Heart left ventricle (tissue), 16 donors: ENCODE measurements at regions of chr11 and their contacts with region 1.

Region 1: DNA sequence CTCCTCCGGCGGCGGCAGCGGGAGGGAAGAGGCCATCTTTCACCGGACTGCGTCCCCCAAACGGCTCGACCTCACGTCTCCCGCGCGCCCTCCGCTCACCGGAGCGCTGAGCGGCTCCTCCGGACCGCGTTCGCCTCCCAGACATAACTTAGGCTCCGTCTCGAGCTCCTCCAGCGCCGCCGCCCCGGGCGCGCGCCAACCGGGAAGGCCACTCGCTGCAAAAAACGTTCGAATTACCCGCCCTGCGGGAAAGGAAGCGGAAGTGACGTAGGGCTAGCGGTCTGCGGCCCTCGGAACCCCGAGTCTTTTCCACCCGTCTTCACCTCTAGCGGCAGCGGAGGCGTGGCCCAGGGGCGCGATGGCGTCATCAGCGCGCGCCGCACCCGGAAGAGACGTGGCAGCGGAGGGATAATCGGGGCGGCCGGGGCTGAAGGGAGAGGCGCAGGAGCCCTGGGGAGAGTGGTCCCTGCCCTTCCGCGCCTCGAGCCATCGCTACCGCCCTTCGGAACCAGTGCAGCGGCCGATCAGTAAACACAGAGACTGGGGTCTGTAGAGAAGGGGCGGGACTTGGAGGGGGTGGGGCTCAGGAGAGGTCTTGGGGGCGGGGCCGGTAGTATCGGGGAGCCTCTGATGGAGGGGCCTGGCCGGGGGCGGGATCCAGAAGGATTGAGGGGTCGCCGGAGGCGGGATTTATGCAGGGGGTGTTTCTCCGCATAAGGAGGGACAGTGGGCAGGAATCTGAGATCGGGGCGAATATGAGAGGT is at the starts of genes CDCA5 and ZFPL1:
- DNase-seq: peak; percentile 95 to 96 (median 95)
- ATAC-seq: peak; percentile 90 to 98 (median 97)
- H3K4me3 ChIP-seq: peak within 1 kb of the TSS; percentile 44 to 93 (median 79)
- H3K27ac ChIP-seq: peak within 1 kb of the TSS; percentile 45 to 95 (median 90)
- H3K4me1 ChIP-seq: peaks cover 4 to 27% (median 16%) of the 10 kb centered on the region in 12 donors
- H3K27me3 ChIP-seq: no peaks in the 10 kb centered on the region
- CTCF ChIP-seq: no peak
- POLR2A ChIP-seq: peak in 1 of 2 donors; percentile 58
- total RNA-seq, gene CDCA5: 0.42 to 11.6 (median 0.81) TPM
- total RNA-seq, gene ZFPL1: 19.6 to 42.8 (median 25.0) TPM

Region 2: DNA sequence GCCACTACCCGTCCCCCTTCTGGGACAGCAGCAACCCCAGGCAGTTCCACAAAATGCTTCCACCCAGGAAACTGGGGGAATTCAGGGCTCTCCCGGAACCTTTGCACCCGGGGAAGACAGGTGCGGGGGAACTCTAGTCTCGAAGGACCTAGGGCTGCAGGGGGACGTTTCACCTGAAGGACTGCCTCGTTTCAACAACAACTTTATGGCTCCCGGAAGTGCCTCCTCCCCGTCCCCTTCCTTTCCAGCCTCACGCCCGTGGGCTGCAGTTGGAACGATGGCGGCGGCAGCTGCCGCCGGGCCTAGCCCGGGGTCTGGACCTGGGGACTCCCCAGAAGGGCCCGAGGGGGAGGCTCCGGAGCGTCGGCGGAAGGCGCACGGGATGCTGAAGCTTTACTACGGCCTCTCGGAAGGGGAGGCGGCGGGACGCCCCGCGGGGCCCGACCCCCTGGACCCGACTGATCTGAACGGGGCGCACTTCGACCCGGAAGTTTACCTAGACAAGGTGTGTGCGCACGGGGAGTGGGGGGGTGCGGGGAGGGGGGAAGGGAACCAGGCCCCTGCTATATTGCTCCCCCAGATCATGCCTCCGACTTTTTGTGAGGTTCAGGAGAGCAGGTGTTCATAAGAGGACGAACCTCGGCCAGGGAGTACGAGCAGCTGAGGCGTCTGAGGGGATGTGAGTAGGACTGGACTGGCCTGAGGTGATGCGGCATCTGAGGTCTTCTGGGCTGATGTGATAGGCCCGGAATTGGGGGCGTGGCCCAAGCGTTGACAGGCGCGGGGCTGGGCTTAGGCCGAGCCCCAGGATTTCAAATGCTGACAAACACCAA is 12.2 kb after region 1 on chr11 and contains the start of gene VPS51:
- intact Hi-C with region 1: loop called in 2 of 10 experiments (anchors 1 kb)
- DNase-seq: peak; percentile 88 to 92 (median 90)
- ATAC-seq: peak; percentile 92 to 96 (median 95)
- H3K4me3 ChIP-seq: peak within 1 kb of the TSS; percentile 59 to 91 (median 85)
- H3K27ac ChIP-seq: peak within 1 kb of the TSS; percentile 52 to 96 (median 92)
- H3K4me1 ChIP-seq: peaks cover 0 to 25% (median 15%) of the 10 kb centered on the region in 12 donors
- H3K27me3 ChIP-seq: no peaks in the 10 kb centered on the region
- CTCF ChIP-seq: no peak
- POLR2A ChIP-seq: peak in 1 of 2 donors; percentile 47
- total RNA-seq, gene VPS51: 78.4 to 165 (median 106) TPM

Region 3: DNA sequence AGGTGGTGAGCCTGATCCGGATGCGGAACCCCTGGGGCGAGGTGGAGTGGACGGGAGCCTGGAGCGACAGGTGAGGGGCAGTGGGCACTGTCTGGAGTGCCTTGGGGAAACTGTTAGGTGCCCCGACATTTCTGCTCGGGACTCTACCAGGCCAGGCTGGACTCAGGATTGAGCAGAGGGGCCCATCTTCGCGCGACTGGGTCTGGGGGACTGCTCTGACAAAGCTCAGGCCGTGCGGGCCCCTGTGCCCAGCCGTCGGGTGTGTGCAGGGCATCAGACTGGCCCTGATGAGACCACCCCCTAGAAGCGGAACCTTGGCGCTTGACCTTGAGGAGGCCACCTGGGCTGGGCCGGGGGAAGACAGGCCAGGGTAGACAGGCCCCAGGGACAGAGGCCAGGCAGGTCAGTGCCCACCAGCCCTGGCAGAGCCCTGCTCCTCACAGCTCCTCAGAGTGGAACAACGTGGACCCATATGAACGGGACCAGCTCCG is 104.0 kb after region 1 on chr11:
- intact Hi-C with region 1: no loop called
- DNase-seq: no peak
- ATAC-seq: peak in 3 of 4 donors; percentile 6 to 17 (median 16)
- H3K4me3 ChIP-seq: no peak overlapping the region
- H3K27ac ChIP-seq: no peak overlapping the region
- H3K4me1 ChIP-seq: peaks cover 0 to 9% (median 0%) of the 10 kb centered on the region in 12 donors
- H3K27me3 ChIP-seq: no peaks in the 10 kb centered on the region
- CTCF ChIP-seq: no peak
- POLR2A ChIP-seq: no peak